ENCODE measurements at regions of chr14 and their contacts with region 1.

Region 1: GRCh38 chr14:23533652-23534435 is 17.7 kb downstream of the ZFHX2 start:
- DNase-seq: no peak
- ATAC-seq: no peak
- H3K4me3 ChIP-seq: no peak overlapping the region
- H3K4me3 Mint-ChIP-seq: no peak overlapping the region
- H3K27ac ChIP-seq: no peak overlapping the region
- H3K27ac Mint-ChIP-seq: no peak overlapping the region
- H3K4me1 ChIP-seq: no peaks in the 10 kb centered on the region
- H3K4me1 Mint-ChIP-seq: peaks cover 5% of the 10 kb centered on the region
- H3K27me3 ChIP-seq: no peaks in the 10 kb centered on the region
- H3K27me3 Mint-ChIP-seq: no peaks in the 10 kb centered on the region
- CTCF ChIP-seq: no peak

Region 2: DNA sequence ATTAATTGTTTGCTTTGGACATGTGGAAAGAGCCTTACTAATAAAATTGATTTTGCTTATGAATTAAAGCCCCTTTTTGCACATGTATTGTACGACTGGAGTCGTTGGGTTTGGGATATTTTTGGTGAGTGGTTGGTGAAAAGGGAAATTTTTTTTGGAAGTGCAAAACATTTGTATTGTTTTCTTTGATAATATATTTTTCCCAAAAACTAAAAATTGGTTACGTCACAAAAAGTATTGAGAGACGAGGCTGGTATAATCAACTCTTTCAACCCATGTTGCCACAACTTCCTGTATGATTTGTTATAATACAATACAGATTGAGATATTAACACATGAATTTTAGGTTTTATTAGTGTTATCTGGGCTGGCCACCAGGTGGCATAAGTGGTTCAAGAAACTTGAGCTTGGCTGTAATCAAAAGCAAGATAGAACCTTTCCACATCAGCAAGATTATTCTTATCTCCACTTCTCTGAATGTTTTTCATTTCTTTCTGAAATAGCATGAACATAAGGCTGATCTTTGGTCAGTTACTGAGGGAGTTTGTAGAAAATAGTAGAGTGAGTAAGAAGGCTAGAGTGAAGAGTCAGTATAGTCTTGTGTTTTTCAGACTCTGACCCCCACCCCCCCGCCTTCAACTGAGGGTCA is 55.6 kb before region 1 on chr14:
- CTCF ChIA-PET with region 1: interaction called, 72 read pairs
- POLR2A ChIA-PET with region 1: no interaction called
- intact Hi-C with region 1: loop called (anchors 1 kb)
- DNase-seq: peak; percentile 27 to 80 (median 69)
- ATAC-seq: peak; percentile 82
- H3K4me3 ChIP-seq: no peak overlapping the region
- H3K4me3 Mint-ChIP-seq: no peak overlapping the region
- H3K27ac ChIP-seq: peak overlapping the region in 1 of 2 experiments; percentile 3
- H3K27ac Mint-ChIP-seq: no peak overlapping the region
- H3K4me1 ChIP-seq: no peaks in the 10 kb centered on the region
- H3K4me1 Mint-ChIP-seq: peaks cover 9% of the 10 kb centered on the region
- H3K27me3 ChIP-seq: no peaks in the 10 kb centered on the region
- H3K27me3 Mint-ChIP-seq: no peaks in the 10 kb centered on the region
- CTCF ChIP-seq: peak; percentile 79

Region 3: GRCh38 chr14:23588884-23589598 is 55.2 kb after region 1 on chr14:
- CTCF ChIA-PET with region 1: no interaction called
- POLR2A ChIA-PET with region 1: no interaction called
- intact Hi-C with region 1: no loop called
- DNase-seq: peak; percentile 65 to 90 (median 83)
- ATAC-seq: peak; percentile 94
- H3K4me3 ChIP-seq: no peak overlapping the region
- H3K4me3 Mint-ChIP-seq: no peak overlapping the region
- H3K27ac ChIP-seq: no peak overlapping the region
- H3K27ac Mint-ChIP-seq: no peak overlapping the region
- H3K4me1 ChIP-seq: peaks cover 9% of the 10 kb centered on the region
- H3K4me1 Mint-ChIP-seq: peaks cover 11% of the 10 kb centered on the region
- H3K27me3 ChIP-seq: no peaks in the 10 kb centered on the region
- H3K27me3 Mint-ChIP-seq: peaks cover 16% of the 10 kb centered on the region
- CTCF ChIP-seq: peak; percentile 65